ENCODE measurements at regions of chr10 and their contacts with region 1.

Region 1: GRCh38 chr10:114103284-114103683 is 59.6 kb downstream of the ADRB1 start:
- DNase-seq: peak in 2 of 4 donors; percentile 53 to 70
- ATAC-seq: peak; percentile 88
- H3K4me3 ChIP-seq: no peak overlapping the region
- H3K27ac ChIP-seq: no peak overlapping the region
- H3K4me1 ChIP-seq: peaks cover 0 to 30% of the 10 kb centered on the region in 2 donors
- H3K27me3 ChIP-seq: peaks cover 0 to 21% of the 10 kb centered on the region in 2 donors
- CTCF ChIP-seq: peak; percentile 39 to 53

Region 2: GRCh38 chr10:113711142-113711541 is 392.1 kb before region 1 on chr10:
- intact Hi-C with region 1: loop called in 1 of 2 experiments (anchors 10 kb)
- DNase-seq: no peak
- ATAC-seq: no peak
- H3K4me3 ChIP-seq: no peak overlapping the region
- H3K27ac ChIP-seq: no peak overlapping the region
- H3K4me1 ChIP-seq: peaks cover 9 to 22% of the 10 kb centered on the region in 2 donors
- H3K27me3 ChIP-seq: no peaks in the 10 kb centered on the region
- CTCF ChIP-seq: no peak

Measured in left lung (tissue), 14 donors.